ENCODE measurements at regions of chr22 and their contacts with region 1.

Region 1: GRCh38 chr22:37643225-37643847 is 3.9 kb downstream of the SH3BP1 start:
- DNase-seq: no peak
- ATAC-seq: peak; percentile 61
- H3K4me3 ChIP-seq: no peak overlapping the region; a peak in 1 of 6 replicates
- H3K27ac ChIP-seq: no peak overlapping the region
- H3K4me1 ChIP-seq: peaks cover 40% of the 10 kb centered on the region
- H3K27me3 ChIP-seq: no peaks in the 10 kb centered on the region
- CTCF ChIP-seq: peak; percentile 92
- EP300 ChIP-seq: no peak
- POLR2A ChIP-seq: no peak
- RAD21 ChIP-seq: peak; percentile 90

Region 2: GRCh38 chr22:37618674-37619073 is 24.7 kb before region 1 on chr22:
- CTCF ChIA-PET with region 1: no interaction called
- POLR2A ChIA-PET with region 1: no interaction called
- in situ Hi-C with region 1: no loop called
- intact Hi-C with region 1: no loop called
- DNase-seq: no peak
- ATAC-seq: no peak
- H3K4me3 ChIP-seq: no peak overlapping the region
- H3K27ac ChIP-seq: no peak overlapping the region
- H3K4me1 ChIP-seq: peaks cover 6% of the 10 kb centered on the region
- H3K27me3 ChIP-seq: no peaks in the 10 kb centered on the region; a peak in 1 of 5 replicates
- CTCF ChIP-seq: no peak
- EP300 ChIP-seq: no peak
- POLR2A ChIP-seq: no peak
- RAD21 ChIP-seq: no peak

Region 3: GRCh38 chr22:37734964-37735451 is 91.7 kb after region 1 on chr22:
- CTCF ChIA-PET with region 1: no interaction called
- POLR2A ChIA-PET with region 1: interaction called, 10 read pairs
- in situ Hi-C with region 1: no loop called
- intact Hi-C with region 1: no loop called
- DNase-seq: peak; percentile 72
- ATAC-seq: peak; percentile 86
- H3K4me3 ChIP-seq: peak overlapping the region; percentile 43 to 61 (median 49); a peak in 4 of 6 replicates
- H3K27ac ChIP-seq: peak overlapping the region; percentile 31
- H3K4me1 ChIP-seq: peaks cover 79% of the 10 kb centered on the region
- H3K27me3 ChIP-seq: no peaks in the 10 kb centered on the region
- CTCF ChIP-seq: peak; percentile 96
- EP300 ChIP-seq: no peak
- POLR2A ChIP-seq: no peak
- RAD21 ChIP-seq: peak; percentile 90

Measured in HepG2 (cell line).